ENCODE measurements at regions of chr6 and their contacts with region 1.

Region 1: DNA sequence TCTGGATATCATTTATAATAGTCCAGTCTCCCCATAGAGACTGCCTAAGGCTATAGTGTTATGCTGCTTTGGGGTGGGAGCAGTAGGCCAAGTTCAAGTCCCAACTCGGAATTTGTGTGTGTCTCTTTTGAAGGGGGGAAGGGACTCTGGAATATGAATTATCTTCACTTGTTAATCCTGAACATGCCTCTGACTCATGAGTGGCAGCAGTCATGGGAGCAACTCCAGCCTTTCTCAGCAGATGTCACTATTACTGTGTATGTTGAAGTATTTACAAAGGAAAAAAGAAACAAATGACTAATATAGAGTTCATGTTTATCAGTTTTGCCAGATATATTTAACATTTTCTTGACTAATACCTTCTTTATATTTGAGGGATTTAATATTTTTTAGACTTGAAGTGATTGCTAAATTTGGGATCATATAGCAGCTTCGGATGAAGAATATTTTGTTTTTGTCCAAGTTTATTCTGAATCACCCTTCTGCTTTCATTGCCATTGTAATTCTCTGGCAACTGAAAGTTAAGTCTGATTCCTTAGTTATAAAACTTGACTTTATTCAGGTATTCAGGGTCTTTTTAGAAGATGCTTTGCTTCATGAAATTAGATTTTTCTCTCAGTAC is 23.4 kb downstream of the FAM217A start:
- ATAC-seq: peak in 3 of 8 experiments; percentile 93 to 95 (median 94)
- H3K4me3 ChIP-seq: no peak overlapping the region
- H3K27ac ChIP-seq: no peak overlapping the region
- H3K4me1 ChIP-seq: no peaks in the 10 kb centered on the region

Region 2: DNA sequence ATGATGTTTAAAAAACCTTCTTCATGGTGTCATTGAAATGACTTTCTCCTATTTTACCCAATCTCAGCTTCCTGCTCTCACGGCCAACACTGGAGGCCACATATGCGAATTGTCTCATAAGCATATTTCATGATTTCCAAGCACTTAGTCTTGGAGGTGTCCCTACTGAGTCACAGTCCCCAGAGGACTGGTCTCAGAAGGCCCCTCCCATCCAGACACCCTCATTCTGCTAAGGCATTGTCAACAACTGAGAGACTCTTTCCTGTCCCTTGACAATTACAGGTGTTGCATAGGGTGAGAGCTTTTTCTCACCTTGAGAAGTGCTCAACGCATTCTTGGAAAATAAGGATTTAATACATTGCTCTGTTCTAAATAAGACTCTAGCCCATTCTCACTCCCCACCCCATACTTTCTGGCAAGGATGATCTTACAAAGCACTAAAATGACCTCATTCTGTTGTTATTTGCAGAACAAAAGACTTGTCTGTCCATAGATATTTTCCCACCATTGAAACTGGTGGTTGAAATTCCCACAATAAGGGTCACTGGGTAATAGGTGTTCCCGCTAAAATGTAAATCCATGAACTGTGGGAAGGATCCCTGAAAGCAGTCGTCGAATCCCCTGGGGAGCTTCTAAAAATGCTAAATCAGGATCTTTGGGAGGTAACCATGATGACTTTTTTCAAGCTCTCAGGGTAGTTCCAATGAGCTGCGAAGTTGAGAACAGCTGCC is 566.3 kb before region 1 on chr6:
- in situ Hi-C with region 1: no loop called
- ATAC-seq: peak; percentile 46 to 86 (median 60)
- H3K4me3 ChIP-seq: no peak overlapping the region
- H3K27ac ChIP-seq: peak overlapping the region in 1 of 2 donors; percentile 57
- H3K4me1 ChIP-seq: peaks cover 25 to 30% of the 10 kb centered on the region in 2 donors

Region 3: GRCh38 chr6:4155848-4156466 is 100.4 kb after region 1 on chr6:
- in situ Hi-C with region 1: loop called in 1 of 9 experiments (anchors 25 kb)
- ATAC-seq: peak; percentile 83 to 96 (median 92)
- H3K4me3 ChIP-seq: no peak overlapping the region
- H3K27ac ChIP-seq: no peak overlapping the region
- H3K4me1 ChIP-seq: no peaks in the 10 kb centered on the region

Region 4: GRCh38 chr6:4577406-4577805 is 521.9 kb after region 1 on chr6:
- in situ Hi-C with region 1: no loop called
- ATAC-seq: peak in 5 of 8 experiments; percentile 7 to 88 (median 47)
- H3K4me3 ChIP-seq: no peak overlapping the region
- H3K27ac ChIP-seq: no peak overlapping the region
- H3K4me1 ChIP-seq: peaks cover 0 to 11% of the 10 kb centered on the region in 2 donors